A673 (cell line): ENCODE measurements at regions of chr1 and their contacts with region 1.

Region 1: DNA sequence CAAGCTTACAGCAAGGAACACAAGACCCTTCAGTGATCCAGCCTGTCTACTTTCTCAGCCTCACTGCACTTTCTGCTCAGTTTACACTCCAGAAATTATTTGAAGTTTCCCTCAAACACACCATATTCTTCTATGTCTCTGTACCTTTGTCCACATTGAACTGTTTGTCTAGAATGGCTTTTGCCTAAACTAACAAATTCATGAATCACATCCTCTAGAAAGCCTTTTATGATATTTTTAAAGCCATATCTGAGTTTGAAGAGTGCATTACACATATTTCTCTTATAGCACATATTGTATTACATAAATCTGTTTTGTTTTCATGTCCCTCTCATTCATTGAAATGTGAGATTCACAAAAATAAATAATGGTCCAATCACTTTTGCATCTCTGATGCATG is 446.0 kb upstream of the ZRANB2 start:
- DNase-seq: no peak
- H3K4me3 ChIP-seq: no peak overlapping the region
- H3K27ac ChIP-seq: no peak overlapping the region
- H3K4me1 ChIP-seq: no peaks in the 10 kb centered on the region
- H3K27me3 ChIP-seq: no peaks in the 10 kb centered on the region
- CTCF ChIP-seq: no peak

Region 2: GRCh38 chr1:71509051-71509595 is 17.7 kb before region 1 on chr1:
- CTCF ChIA-PET with region 1: no interaction called
- POLR2A ChIA-PET with region 1: no interaction called
- intact Hi-C with region 1: loop called (anchors 2 kb)
- DNase-seq: no peak
- H3K4me3 ChIP-seq: no peak overlapping the region
- H3K27ac ChIP-seq: no peak overlapping the region
- H3K4me1 ChIP-seq: no peaks in the 10 kb centered on the region
- H3K27me3 ChIP-seq: no peaks in the 10 kb centered on the region
- CTCF ChIP-seq: no peak